CD4-positive, alpha-beta T cell (primary cell): ENCODE measurements at regions of chr15 and their contacts with region 1.

Region 1: DNA sequence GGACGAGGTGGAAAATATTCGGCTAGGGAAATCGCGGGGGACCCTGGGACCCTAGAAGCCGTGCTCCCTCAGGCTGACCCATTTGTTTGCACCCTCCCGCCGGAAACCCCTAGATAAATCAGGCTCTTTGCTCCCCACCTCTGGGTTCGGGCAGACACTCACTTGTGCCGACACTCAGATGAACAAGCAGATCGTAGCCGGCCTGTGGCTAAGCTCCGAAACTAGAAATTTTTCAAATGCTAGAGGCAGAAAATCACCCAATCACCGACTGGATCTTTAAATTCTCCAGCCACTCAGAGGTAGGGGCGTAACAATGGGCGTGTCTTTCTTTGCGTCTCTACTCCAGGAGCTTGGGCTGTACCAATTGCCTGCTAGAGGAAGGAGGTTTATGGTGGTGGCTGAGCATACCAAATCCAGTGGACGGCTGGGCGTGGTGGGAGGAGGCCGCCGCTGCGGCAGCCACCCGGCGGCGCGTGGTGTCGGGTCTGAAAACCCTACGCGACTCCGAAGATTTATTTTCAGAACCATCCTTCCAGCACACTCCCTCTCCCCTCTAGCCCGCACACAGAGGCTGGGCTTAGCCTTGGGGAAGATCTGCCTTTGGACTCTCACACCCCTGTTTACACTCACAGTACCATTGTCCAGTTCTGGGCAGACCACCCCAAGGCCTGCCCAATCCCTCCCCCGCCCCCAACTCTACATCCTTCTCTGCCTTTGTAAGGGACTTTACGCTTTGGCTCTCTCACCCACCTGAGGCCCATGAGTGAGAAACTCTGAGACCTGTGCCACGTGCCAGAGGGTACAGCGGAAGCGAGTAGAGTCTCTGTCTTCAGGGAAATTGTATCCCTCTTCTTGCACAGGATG is at the start of gene PIF1:
- DNase-seq: peak; percentile 72 to 97 (median 81)
- ATAC-seq: peak; percentile 98
- H3K4me3 ChIP-seq: peak within 1 kb of the TSS; percentile 61
- H3K4me3 Mint-ChIP-seq: peak within 1 kb of the TSS; percentile 86
- H3K27ac ChIP-seq: peak within 1 kb of the TSS in 1 of 2 donors; percentile 9
- H3K27ac Mint-ChIP-seq: peak within 1 kb of the TSS; percentile 61
- H3K4me1 ChIP-seq: peaks cover 37% of the 10 kb centered on the region
- H3K4me1 Mint-ChIP-seq: peaks cover 31% of the 10 kb centered on the region
- H3K27me3 ChIP-seq: peaks cover 5 to 7% of the 10 kb centered on the region in 2 experiments
- H3K27me3 Mint-ChIP-seq: peaks cover 17% of the 10 kb centered on the region
- CTCF ChIP-seq: no peak
- total RNA-seq, gene PIF1: 0.22 to 0.27 TPM

Region 2: DNA sequence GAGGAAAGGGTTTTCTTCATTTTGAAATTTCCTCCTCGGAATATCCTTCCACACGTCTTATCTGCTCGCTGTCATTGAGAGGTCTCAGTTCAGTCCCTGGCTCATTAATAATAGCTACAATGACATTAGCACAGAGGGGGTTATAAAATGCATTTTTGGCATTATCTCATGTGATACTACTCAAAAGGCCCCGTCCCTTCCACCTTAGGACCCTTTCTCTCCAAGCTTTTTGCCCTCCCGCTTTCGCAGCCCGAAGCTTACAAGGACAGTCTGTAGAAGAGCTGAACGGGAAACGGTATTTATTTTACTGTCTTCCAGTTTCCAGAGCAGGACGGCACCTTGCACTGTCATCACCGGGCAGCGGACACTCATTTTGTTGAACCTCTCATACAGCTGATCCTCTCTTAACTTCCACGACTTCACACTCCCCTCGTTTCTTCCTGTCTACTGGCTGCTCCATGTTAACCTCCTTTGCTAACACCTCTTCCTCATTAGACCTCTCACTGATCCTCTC is 10.4 kb after region 1 on chr15:
- CTCF ChIA-PET with region 1: interaction called, 24 read pairs
- POLR2A ChIA-PET with region 1: interaction called, 31 read pairs
- intact Hi-C with region 1: loop called (anchors 1 kb)
- DNase-seq: no peak
- ATAC-seq: no peak
- H3K4me3 ChIP-seq: no peak overlapping the region
- H3K4me3 Mint-ChIP-seq: peak overlapping the region; percentile 64
- H3K27ac ChIP-seq: peak overlapping the region in 1 of 2 donors; percentile 3
- H3K27ac Mint-ChIP-seq: peak overlapping the region; percentile 51
- H3K4me1 ChIP-seq: peaks cover 48% of the 10 kb centered on the region
- H3K4me1 Mint-ChIP-seq: peaks cover 54% of the 10 kb centered on the region
- H3K27me3 ChIP-seq: no peaks in the 10 kb centered on the region
- H3K27me3 Mint-ChIP-seq: no peaks in the 10 kb centered on the region
- CTCF ChIP-seq: peak; percentile 24